WTC11 (cell line): ENCODE measurements at regions of chr9 and their contacts with region 1.

Region 1: DNA sequence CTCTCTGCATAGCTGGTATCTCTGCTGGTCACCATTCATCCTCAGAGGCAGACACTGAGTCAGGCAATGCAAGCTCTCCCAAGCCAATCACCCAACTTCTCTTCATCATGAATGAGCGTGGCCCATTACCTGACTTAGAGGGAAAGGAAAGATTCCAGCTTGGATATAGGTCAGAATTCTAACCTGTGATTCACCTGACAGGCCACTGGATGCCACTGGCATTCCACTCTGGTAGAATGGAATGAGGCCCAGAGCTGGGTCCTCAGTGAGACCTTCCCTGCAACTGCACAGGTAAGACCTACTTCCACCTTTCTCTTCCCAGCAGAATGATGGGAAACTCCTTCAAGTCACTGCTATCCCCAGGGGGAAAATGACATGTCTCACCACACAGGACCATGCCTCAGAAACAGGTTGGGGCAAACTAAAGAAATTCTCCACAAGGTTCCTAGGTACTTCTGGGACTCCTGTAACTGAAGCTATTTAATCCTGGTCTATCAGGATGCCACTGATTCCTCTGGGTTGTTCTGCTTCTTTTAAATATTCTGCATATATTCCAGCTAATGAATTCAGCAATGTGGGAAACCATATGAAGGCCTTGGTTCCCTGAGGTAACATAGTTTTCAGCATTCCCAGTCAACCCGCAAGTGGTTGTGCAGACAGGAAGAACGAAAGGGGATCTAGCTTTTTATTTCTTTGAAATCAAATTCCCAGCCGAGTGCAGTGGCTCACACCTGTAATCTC is 62.0 kb downstream of the SUSD1 start:
- DNase-seq: peak; percentile 64
- ATAC-seq: peak; percentile 99
- H3K4me3 Mint-ChIP-seq: no peak overlapping the region
- H3K27ac Mint-ChIP-seq: no peak overlapping the region
- H3K4me1 Mint-ChIP-seq: peaks cover 3% of the 10 kb centered on the region; the same call in 1 of the 2 replicates
- H3K27me3 Mint-ChIP-seq: no peaks in the 10 kb centered on the region
- CTCF ChIP-seq: peak; percentile 47; the same call in 1 of the 2 replicates

Region 2: DNA sequence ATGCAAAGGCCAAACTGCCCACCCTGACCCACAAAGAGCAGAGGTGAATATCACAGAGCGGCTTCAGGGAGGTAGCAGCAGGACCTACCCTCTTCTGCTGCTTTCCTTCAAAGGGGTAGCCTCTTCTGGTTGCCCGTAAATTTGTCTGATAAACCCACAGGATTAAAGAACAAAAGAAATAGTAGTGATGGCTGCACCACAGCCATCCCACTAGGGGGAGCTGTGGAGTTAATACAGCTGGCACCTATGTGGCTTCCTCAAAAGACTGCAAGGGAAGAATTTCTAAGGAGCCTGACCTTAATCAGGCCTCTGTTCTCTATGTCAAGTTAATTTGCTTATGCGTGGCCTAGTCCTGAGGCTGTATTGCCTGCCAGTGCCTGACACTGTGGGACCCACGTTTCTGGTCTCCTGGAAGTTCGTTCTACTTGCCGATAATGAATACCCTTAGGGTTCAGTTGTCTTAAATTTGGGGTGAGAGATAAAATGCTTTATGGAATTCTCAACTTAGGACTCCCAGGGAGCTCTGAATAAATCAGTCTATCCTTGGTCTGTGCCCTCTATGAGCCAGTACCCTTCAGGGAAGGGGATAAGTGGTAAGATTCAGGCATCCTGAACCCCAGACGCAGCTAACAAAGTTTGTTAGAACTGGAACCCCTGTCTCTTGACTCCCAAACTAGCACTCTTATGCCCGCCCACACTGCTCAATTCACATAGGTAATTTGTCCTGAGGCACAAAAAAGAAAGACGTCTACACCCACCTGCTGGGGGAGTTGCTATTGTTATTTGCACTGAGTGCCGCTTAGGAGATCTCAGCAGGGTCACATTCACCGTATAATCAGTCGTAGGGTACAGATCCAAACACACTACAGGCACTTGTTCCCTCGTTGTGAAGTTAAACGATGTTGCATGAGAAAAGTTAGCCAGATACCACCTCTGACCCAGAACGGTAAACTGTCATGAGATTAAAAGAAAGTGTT is 15.1 kb before region 1 on chr9:
- CTCF ChIA-PET with region 1: interaction called, 25 read pairs
- POLR2A ChIA-PET with region 1: no interaction called
- DNase-seq: peak; percentile 77
- ATAC-seq: peak; percentile 85
- H3K4me3 Mint-ChIP-seq: peak overlapping the region; percentile 38
- H3K27ac Mint-ChIP-seq: peak overlapping the region; percentile 79
- H3K4me1 Mint-ChIP-seq: peaks cover 19% of the 10 kb centered on the region
- H3K27me3 Mint-ChIP-seq: peaks cover 5% of the 10 kb centered on the region
- CTCF ChIP-seq: peak; percentile 84; the same call in 1 of the 2 replicates

Region 3: GRCh38 chr9:112174218-112174964 is 61.3 kb after region 1 on chr9:
- CTCF ChIA-PET with region 1: interaction called, 10 read pairs
- POLR2A ChIA-PET with region 1: no interaction called
- DNase-seq: peak; percentile 26
- ATAC-seq: peak; percentile 37
- H3K4me3 Mint-ChIP-seq: peak overlapping the region; percentile 76
- H3K27ac Mint-ChIP-seq: no peak overlapping the region
- H3K4me1 Mint-ChIP-seq: peaks cover 40% of the 10 kb centered on the region
- H3K27me3 Mint-ChIP-seq: peaks cover 40% of the 10 kb centered on the region
- CTCF ChIP-seq: no peak

Region 4: DNA sequence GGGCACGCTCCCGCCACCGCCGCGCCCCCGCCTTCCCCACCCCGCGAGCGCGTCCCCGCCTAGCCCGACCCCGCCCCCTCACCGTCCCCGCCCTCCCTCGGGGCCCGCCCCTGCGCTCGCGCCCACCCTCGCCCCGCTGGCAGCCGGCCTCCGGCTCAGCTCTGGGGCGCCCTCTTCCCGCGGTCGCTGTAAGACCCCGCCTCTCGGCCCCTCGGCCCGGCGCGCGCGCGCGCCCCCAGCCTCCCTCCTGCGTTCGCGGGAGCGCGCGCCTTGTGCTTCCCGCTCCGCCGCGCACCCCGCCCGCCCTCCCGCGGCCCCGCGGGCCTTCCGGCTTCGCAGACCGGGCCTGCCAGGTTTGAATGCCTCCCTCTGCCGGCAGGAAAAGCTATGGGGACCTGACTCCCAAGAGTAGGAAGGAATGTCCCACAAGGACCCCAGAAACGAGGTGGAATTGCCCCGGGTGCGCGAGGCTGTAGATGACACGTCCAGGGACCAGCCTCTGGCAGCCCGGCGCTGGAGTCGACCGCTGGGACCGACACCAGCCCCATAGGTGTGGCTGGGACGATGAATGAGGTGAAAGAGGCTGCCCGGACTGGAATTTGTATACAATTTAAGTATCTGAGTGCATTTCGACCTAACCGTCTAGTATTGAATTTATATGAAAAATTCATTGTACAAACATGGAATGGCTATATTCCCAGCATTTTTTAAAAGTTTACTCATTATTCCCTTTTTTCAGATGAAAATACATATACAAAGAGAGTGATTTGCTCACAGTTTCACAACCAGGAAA is 220.7 kb after region 1 on chr9:
- CTCF ChIA-PET with region 1: interaction called, 31 read pairs
- POLR2A ChIA-PET with region 1: interaction called, 6 read pairs
- DNase-seq: peak; percentile 95
- ATAC-seq: peak; percentile 92
- H3K4me3 Mint-ChIP-seq: peak overlapping the region; percentile 92
- H3K27ac Mint-ChIP-seq: peak overlapping the region; percentile 99
- H3K4me1 Mint-ChIP-seq: peaks cover 29% of the 10 kb centered on the region
- H3K27me3 Mint-ChIP-seq: no peaks in the 10 kb centered on the region
- CTCF ChIP-seq: peak; percentile 10; the same call in 1 of the 2 replicates

Region 5: GRCh38 chr9:112361601-112362000 is 248.5 kb after region 1 on chr9:
- CTCF ChIA-PET with region 1: interaction called, 23 read pairs
- POLR2A ChIA-PET with region 1: no interaction called
- DNase-seq: no peak
- ATAC-seq: no peak
- H3K4me3 Mint-ChIP-seq: no peak overlapping the region
- H3K27ac Mint-ChIP-seq: no peak overlapping the region
- H3K4me1 Mint-ChIP-seq: no peaks in the 10 kb centered on the region
- H3K27me3 Mint-ChIP-seq: no peaks in the 10 kb centered on the region
- CTCF ChIP-seq: peak; percentile 43

Region 6: DNA sequence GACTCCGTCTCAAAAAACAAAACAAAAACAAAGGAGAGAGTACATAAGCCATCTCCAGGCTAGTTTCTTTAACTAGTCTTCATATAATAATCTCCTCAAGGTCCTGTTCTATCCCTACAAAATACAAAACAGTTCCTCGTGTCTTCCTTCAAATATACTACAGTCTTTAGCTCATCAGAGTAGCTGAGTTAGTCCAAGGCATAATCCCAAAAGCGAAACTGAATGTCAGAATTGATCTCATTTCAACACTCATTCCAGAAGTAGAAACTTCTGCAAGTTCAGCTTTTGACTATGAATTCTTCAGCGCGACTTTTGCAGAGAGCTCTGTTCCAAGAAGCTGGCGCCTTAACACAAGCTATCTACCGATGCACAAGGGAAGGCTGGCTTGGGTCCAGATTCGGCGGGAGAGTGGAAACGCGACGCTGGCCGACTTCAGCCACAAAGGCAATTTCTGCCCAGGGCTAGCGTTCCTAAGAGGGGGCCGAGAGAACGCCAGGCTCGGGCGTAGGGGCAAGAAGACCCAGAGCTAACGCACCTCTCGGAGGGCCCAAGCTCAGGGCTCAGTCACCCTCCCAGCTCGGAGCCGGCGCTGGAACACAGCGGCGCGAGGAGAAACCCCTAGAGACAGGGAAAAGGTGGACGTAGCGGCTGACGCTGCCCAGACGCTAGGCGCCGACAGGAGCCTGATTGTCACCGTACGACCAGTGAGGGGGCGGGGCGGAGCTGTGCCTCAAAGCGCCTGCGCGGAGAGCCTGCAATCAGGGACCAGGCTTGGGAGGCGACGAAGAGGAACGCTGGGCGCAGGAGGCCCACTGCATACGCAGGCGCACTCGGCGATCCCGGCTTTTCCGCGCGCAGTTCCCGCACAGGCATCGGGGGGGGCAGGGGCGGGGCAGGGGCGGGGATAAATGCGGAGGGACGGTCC is 266.3 kb after region 1 on chr9:
- CTCF ChIA-PET with region 1: interaction called, 13 read pairs
- POLR2A ChIA-PET with region 1: no interaction called
- DNase-seq: peak; percentile 100
- ATAC-seq: peak; percentile 97
- H3K4me3 Mint-ChIP-seq: peak overlapping the region; percentile 90
- H3K27ac Mint-ChIP-seq: peak overlapping the region; percentile 99
- H3K4me1 Mint-ChIP-seq: peaks cover 29% of the 10 kb centered on the region
- H3K27me3 Mint-ChIP-seq: no peaks in the 10 kb centered on the region
- CTCF ChIP-seq: no peak

Region 7: GRCh38 chr9:112819635-112820496 is 706.8 kb after region 1 on chr9:
- CTCF ChIA-PET with region 1: interaction called, 10 read pairs
- POLR2A ChIA-PET with region 1: no interaction called
- DNase-seq: peak; percentile 31
- ATAC-seq: peak; percentile 98
- H3K4me3 Mint-ChIP-seq: no peak overlapping the region
- H3K27ac Mint-ChIP-seq: peak overlapping the region; percentile 13
- H3K4me1 Mint-ChIP-seq: no peaks in the 10 kb centered on the region
- H3K27me3 Mint-ChIP-seq: no peaks in the 10 kb centered on the region
- CTCF ChIP-seq: peak; percentile 52